CD8-positive, alpha-beta T cell (primary cell): ENCODE measurements at regions of chr7 and their contacts with region 1.

Region 1: GRCh38 chr7:55432939-55433784 is 68.0 kb downstream of the LANCL2 start:
- DNase-seq: peak in 2 of 9 experiments; percentile 41 to 53
- ATAC-seq: peak; percentile 71
- H3K4me3 ChIP-seq: no peak overlapping the region
- H3K4me3 Mint-ChIP-seq: no peak overlapping the region
- H3K27ac ChIP-seq: no peak overlapping the region
- H3K27ac Mint-ChIP-seq: no peak overlapping the region
- H3K4me1 ChIP-seq: peaks cover 14% of the 10 kb centered on the region
- H3K4me1 Mint-ChIP-seq: peaks cover 31% of the 10 kb centered on the region
- H3K27me3 ChIP-seq: no peaks in the 10 kb centered on the region
- H3K27me3 Mint-ChIP-seq: no peaks in the 10 kb centered on the region
- CTCF ChIP-seq: peak; percentile 67

Region 2: GRCh38 chr7:55120481-55121198 is 312.5 kb before region 1 on chr7:
- CTCF ChIA-PET with region 1: no interaction called
- POLR2A ChIA-PET with region 1: no interaction called
- intact Hi-C with region 1: no loop called
- DNase-seq: no peak
- ATAC-seq: no peak
- H3K4me3 ChIP-seq: no peak overlapping the region
- H3K4me3 Mint-ChIP-seq: no peak overlapping the region
- H3K27ac ChIP-seq: no peak overlapping the region
- H3K27ac Mint-ChIP-seq: no peak overlapping the region
- H3K4me1 ChIP-seq: no peaks in the 10 kb centered on the region
- H3K4me1 Mint-ChIP-seq: no peaks in the 10 kb centered on the region
- H3K27me3 ChIP-seq: no peaks in the 10 kb centered on the region
- H3K27me3 Mint-ChIP-seq: no peaks in the 10 kb centered on the region
- CTCF ChIP-seq: no peak

Region 3: GRCh38 chr7:55469271-55469681 is 36.1 kb after region 1 on chr7:
- CTCF ChIA-PET with region 1: interaction called, 9 read pairs
- POLR2A ChIA-PET with region 1: no interaction called
- intact Hi-C with region 1: loop called in 1 of 2 experiments (anchors 2 kb)
- DNase-seq: peak in 8 of 9 experiments; percentile 19 to 74 (median 54)
- ATAC-seq: peak; percentile 72
- H3K4me3 ChIP-seq: peak overlapping the region in 1 of 2 experiments; percentile 4
- H3K4me3 Mint-ChIP-seq: peak overlapping the region; percentile 54
- H3K27ac ChIP-seq: peak overlapping the region; percentile 31 to 62
- H3K27ac Mint-ChIP-seq: peak overlapping the region; percentile 96
- H3K4me1 ChIP-seq: peaks cover 63% of the 10 kb centered on the region
- H3K4me1 Mint-ChIP-seq: peaks cover 67% of the 10 kb centered on the region
- H3K27me3 ChIP-seq: no peaks in the 10 kb centered on the region
- H3K27me3 Mint-ChIP-seq: no peaks in the 10 kb centered on the region
- CTCF ChIP-seq: no peak

Region 4: DNA sequence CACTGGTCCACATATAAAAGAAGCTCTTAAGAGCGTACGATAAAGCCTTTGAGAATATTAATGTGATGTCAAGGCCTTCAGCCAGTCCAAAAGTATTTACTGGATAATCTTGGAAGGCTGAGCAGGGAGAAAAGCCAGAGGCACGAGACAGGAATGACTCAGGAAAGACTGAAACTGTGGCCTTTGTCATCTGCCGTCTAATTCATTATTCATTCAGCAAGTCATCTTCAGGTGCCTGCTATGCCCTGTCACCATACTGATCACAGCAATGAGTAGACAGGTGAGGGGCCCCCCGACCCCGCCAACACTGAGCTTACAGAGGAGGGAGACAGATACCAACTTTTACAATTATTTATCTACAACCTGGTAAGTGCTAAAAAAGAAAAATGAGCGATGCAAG is 60.2 kb after region 1 on chr7:
- CTCF ChIA-PET with region 1: interaction called, 3 read pairs
- POLR2A ChIA-PET with region 1: no interaction called
- intact Hi-C with region 1: loop called in 1 of 2 experiments (anchors 10 kb)
- DNase-seq: no peak
- ATAC-seq: no peak
- H3K4me3 ChIP-seq: no peak overlapping the region
- H3K4me3 Mint-ChIP-seq: no peak overlapping the region
- H3K27ac ChIP-seq: no peak overlapping the region
- H3K27ac Mint-ChIP-seq: no peak overlapping the region
- H3K4me1 ChIP-seq: peaks cover 17% of the 10 kb centered on the region
- H3K4me1 Mint-ChIP-seq: peaks cover 31% of the 10 kb centered on the region
- H3K27me3 ChIP-seq: no peaks in the 10 kb centered on the region
- H3K27me3 Mint-ChIP-seq: no peaks in the 10 kb centered on the region
- CTCF ChIP-seq: no peak

Region 5: GRCh38 chr7:55593515-55594318 is 160.6 kb after region 1 on chr7:
- CTCF ChIA-PET with region 1: interaction called, 16 read pairs
- POLR2A ChIA-PET with region 1: no interaction called
- intact Hi-C with region 1: loop called (anchors 1 to 2 kb)
- DNase-seq: peak; percentile 40 to 82 (median 68)
- ATAC-seq: peak; percentile 51
- H3K4me3 ChIP-seq: no peak overlapping the region
- H3K4me3 Mint-ChIP-seq: no peak overlapping the region
- H3K27ac ChIP-seq: no peak overlapping the region
- H3K27ac Mint-ChIP-seq: no peak overlapping the region
- H3K4me1 ChIP-seq: peaks cover 5% of the 10 kb centered on the region
- H3K4me1 Mint-ChIP-seq: peaks cover 7% of the 10 kb centered on the region
- H3K27me3 ChIP-seq: peaks cover 0 to 3% of the 10 kb centered on the region in 2 experiments
- H3K27me3 Mint-ChIP-seq: peaks cover 2% of the 10 kb centered on the region
- CTCF ChIP-seq: peak; percentile 73

Region 6: GRCh38 chr7:55723621-55723941 is 290.4 kb after region 1 on chr7:
- CTCF ChIA-PET with region 1: no interaction called
- POLR2A ChIA-PET with region 1: no interaction called
- intact Hi-C with region 1: loop called in 1 of 2 experiments (anchors 5 kb)
- DNase-seq: no peak
- ATAC-seq: no peak
- H3K4me3 ChIP-seq: no peak overlapping the region
- H3K4me3 Mint-ChIP-seq: no peak overlapping the region
- H3K27ac ChIP-seq: no peak overlapping the region
- H3K27ac Mint-ChIP-seq: no peak overlapping the region
- H3K4me1 ChIP-seq: no peaks in the 10 kb centered on the region
- H3K4me1 Mint-ChIP-seq: no peaks in the 10 kb centered on the region
- H3K27me3 ChIP-seq: no peaks in the 10 kb centered on the region
- H3K27me3 Mint-ChIP-seq: peaks cover 4% of the 10 kb centered on the region
- CTCF ChIP-seq: no peak